ENCODE measurements at regions of chr1 and their contacts with region 1.

Region 1: DNA sequence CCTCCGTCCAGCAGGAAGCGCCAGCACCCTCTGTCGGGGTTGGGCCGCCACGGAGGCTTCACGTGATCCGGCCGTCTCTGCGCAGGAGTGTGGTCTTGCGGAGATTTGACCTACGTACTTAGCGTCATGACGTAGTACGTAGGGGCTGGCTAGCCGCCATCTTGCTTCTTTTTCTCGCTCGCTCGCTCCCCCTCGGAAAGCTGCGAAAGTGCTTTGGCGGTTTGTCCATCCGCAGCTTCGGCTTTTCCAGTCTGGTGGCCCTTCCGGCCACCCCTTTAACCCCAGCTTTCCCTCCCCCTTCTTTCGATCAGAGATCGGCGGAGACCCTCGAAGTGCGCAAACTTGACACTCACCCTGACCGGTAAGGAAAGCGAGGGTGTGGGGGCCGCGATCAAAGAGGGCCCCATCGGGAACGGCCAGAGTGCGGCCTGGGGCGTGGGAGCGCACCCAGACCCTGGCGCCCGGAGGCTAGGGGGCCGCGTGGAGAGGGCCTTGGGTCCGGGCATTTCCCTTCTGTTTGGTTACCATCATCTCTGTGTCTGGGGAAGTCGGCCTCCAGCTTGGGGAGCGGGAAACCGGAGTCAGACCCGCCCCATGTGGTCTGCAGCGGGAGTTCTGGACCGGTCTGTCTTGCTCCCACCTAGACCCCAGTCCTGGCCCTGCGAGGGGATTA is at the start of gene PRRC2C:
- DNase-seq: peak; percentile 97
- H3K4me3 ChIP-seq: peak within 1 kb of the TSS; percentile 96
- H3K27ac ChIP-seq: peak within 1 kb of the TSS; percentile 100
- H3K27me3 ChIP-seq: no peaks in the 10 kb centered on the region
- CTCF ChIP-seq: peak; percentile 78
- polyA plus RNA-seq, gene PRRC2C: 66.4 and 80.0 TPM in 2 replicates

Region 2: DNA sequence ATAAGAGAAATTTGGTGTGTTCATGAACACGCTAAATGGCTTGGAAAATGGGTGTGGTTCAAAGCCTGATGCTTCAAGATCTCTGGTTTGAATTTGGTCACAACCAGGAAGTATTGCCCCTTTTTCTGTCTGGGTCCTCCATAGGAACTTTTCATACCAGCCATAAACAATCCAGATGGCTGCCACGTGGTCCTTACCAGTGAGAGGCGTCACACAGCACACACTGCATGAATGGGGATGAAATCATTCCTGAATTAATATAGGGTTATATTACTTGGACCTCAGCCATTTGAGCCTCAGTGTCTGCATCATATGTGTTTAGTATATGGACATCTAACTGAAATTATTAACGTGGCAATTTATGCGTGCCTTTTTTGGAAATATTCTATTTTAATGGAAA is 757.5 kb before region 1 on chr1:
- CTCF ChIA-PET with region 1: no interaction called
- POLR2A ChIA-PET with region 1: no interaction called
- DNase-seq: no peak
- H3K4me3 ChIP-seq: no peak overlapping the region
- H3K27ac ChIP-seq: no peak overlapping the region
- H3K27me3 ChIP-seq: no peaks in the 10 kb centered on the region
- CTCF ChIP-seq: no peak

Region 3: DNA sequence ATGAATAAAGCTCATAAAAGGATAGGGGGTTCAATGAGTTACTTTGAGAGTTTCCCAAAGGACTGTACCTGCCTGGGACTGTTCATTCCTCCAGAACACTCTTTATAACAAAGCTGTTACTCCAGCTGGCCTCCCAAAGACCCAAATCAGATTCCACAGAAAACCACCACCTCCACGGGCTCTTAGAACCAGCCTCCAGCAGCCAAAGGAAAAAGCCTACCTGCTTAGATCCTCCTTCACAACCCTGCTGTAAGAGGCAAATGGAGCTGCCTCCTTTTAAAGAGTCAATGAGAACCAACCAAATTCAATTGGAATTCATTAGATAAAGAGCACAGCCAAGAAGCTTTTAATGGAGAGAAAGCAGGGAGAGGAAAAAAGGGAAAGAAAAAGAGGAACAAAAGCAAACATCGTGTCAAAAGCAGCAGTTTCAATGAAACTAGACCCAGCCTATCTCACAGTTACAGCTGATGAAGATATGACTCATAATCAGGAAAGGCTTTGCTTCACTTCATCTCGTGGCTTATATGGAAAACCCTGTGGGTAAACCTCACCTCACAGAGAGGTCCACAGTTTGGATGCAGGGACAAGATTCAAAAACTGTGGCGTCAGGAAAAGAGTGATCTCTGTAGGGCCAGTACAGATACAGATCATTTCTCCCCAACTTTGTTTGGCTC is 199.3 kb before region 1 on chr1:
- CTCF ChIA-PET with region 1: no interaction called
- POLR2A ChIA-PET with region 1: no interaction called
- DNase-seq: no peak
- H3K4me3 ChIP-seq: no peak overlapping the region
- H3K27ac ChIP-seq: no peak overlapping the region
- H3K27me3 ChIP-seq: no peaks in the 10 kb centered on the region
- CTCF ChIP-seq: no peak

Region 4: DNA sequence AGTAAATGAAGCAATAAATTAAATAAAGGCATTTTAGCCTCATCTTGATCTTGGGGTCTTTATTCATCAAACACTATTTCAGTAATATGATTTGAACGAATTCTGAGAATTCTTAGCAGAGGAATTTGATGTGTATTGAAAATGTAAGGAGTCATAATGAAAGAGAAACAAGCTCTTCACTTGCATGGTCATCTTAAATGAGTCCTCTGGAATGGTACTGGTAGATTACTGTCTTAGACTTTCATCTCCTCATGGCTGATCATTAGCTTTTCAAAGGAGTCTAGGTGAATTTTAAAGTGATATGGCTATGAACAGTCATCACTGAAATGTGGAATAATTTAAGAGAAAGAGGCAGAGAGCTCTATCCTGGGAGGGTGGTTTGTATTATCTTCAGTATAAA is 29.8 kb after region 1 on chr1:
- CTCF ChIA-PET with region 1: interaction called, 20 read pairs
- POLR2A ChIA-PET with region 1: no interaction called
- DNase-seq: no peak
- H3K4me3 ChIP-seq: no peak overlapping the region
- H3K27ac ChIP-seq: no peak overlapping the region
- H3K27me3 ChIP-seq: no peaks in the 10 kb centered on the region
- CTCF ChIP-seq: no peak